Activated CD4-positive, alpha-beta memory T cell treated with anti-CD3 and anti-CD28 coated beads, Interleukin-2, amount 10 ng/mL, durations not matched to agents 7 days and 5 days (primary cell): ENCODE measurements at regions of chr1 and their contacts with region 1.

Region 1: DNA sequence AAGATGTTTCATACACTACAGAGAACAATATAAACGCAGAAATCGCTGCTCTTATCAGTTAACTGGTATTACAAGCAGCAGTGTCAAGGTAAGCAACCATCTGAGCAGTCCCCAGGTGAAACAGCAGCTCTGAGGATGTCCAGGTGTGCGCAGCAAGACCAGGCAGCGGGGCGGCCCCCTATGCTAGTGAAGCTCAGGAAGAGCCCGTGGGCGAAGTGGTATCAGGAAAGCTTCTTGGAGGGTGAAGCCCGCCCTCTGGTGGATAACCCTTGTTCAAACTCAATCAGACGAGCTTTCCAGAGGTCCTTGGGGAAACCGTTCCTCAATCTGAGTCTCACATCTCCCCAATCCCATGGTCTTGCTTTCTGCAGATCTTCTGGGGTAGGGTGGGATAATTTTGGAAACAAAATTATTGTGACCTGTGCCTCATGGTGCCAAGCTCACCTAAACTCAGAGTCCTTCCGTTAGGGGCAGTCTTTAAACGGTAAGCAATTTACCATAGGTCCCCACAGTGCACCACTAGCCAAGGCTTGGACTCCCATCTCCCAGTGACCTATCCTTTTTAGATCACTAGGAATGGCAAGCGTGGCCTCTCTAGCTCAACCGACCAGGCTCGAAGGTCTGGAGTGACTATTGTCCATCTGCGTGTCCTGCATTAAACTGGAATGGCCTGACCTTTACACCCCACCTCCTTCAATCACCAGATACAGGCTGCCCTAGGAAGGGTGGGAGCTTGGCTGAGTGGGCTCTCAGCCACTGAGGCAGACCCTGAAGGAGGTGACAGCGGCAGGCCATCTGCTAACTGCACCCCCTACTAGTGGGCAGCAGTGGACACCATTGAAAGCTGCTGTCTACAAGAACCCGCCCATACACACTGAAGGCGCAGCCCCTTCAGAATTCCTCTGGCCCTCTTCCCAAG is 13.6 kb upstream of the FAM110D start:
- DNase-seq: peak; percentile 76
- H3K4me3 Mint-ChIP-seq: no peak overlapping the region
- H3K27ac Mint-ChIP-seq: no peak overlapping the region
- H3K4me1 Mint-ChIP-seq: peaks cover 2% of the 10 kb centered on the region
- H3K27me3 Mint-ChIP-seq: peaks cover 30% of the 10 kb centered on the region

Region 2: DNA sequence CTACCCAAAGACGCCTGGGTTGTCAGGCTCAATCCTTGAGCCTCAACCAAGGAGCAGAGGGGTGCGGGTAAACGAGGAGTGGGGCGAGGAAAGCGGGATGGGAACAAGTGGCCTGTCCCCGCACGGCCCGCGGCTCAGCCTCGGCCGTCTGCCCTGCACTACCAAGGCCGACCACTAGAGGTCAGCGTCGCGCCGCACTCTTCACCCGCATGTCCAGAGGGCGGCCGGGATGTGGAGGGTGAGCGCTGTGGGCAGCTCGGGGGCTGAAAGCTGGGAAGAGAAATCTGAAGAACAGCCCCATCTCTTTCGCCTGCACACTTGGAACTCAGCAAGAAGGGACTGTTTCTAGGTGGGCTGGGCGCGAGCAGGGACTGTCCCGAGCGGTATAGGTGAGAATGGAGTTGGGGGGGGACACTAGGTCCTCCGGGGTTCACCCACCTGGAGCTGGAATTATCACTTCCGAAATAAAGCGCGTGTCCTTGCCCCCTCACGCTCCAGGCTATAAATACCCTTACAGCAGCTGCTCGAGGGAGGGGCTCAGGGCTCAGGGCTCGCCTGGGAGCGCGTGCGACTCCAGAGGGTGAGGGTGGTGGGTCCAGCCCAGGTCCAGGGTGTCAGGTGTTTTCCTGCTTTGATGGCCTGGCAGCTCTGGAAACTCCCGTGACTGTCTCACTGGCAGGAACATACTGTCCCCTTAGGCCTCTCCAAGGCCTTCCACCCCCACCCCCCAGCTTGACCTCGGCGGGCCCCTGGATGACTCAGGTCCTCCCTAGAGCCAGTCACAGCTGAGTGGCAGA is 109.1 kb before region 1 on chr1:
- CTCF ChIA-PET with region 1: interaction called, 33 read pairs
- POLR2A ChIA-PET with region 1: no interaction called
- DNase-seq: peak; percentile 77
- H3K4me3 Mint-ChIP-seq: peak overlapping the region; percentile 90
- H3K27ac Mint-ChIP-seq: no peak overlapping the region
- H3K4me1 Mint-ChIP-seq: peaks cover 11% of the 10 kb centered on the region
- H3K27me3 Mint-ChIP-seq: peaks cover 21% of the 10 kb centered on the region

Region 3: GRCh38 chr1:26102526-26102925 is 42.8 kb before region 1 on chr1:
- CTCF ChIA-PET with region 1: interaction called, 168 read pairs
- POLR2A ChIA-PET with region 1: interaction called, 18 read pairs
- DNase-seq: no peak
- H3K4me3 Mint-ChIP-seq: no peak overlapping the region
- H3K27ac Mint-ChIP-seq: no peak overlapping the region
- H3K4me1 Mint-ChIP-seq: peaks cover 20% of the 10 kb centered on the region
- H3K27me3 Mint-ChIP-seq: peaks cover 16% of the 10 kb centered on the region

Region 4: DNA sequence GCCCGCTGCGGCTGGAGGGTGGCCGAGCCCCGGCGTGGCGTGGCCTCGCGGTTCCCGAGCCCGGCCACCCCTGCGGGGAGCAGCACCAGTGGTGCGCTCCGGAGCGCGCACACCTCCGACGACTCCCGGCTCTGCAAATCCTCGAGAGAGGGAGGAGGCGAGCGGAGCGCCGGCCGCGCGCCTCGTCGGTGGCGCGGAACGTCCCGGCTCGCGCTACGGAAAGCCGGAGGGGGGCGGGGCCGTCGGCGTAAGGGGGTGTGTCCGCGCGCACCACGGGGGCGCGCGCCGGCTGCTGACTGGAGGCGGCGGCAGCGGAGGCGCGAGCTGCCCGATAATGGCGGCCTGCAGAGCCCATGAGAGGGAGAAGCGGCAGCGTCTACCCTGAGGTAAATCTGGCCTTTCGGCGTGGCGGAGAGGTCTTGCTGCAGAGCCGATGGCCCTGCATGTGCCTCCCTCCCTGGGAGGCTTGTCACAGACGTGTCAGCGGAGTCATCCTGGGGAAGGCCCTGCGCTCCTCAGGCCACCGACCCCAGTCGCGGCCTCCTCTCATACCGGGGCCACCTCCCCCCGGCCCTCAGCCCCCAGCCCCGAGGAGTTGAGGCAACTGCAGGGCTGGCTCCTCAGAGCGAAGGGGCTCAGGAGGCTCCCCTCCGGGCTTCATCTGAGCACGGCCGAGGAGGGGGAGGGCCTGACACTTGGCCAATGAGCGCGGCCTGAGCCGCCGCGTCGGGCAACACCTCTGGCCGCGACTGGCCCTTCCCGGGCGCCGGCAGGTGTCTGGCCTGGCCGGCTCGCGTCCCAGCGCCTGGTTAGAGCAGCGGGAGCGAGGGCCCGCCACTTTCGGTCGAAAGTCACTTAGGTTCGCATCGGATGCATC is 33.5 kb before region 1 on chr1 and contains the start of gene PDIK1L:
- CTCF ChIA-PET with region 1: interaction called, 168 read pairs
- POLR2A ChIA-PET with region 1: interaction called, 22 read pairs
- DNase-seq: peak; percentile 95
- H3K4me3 Mint-ChIP-seq: peak within 1 kb of the TSS; percentile 95
- H3K27ac Mint-ChIP-seq: peak within 1 kb of the TSS; percentile 86
- H3K4me1 Mint-ChIP-seq: peaks cover 35% of the 10 kb centered on the region
- H3K27me3 Mint-ChIP-seq: no peaks in the 10 kb centered on the region
- total RNA-seq, gene PDIK1L: 21.3 to 22.7 TPM

Region 5: GRCh38 chr1:26161415-26162219 is 16.3 kb after region 1 on chr1:
- CTCF ChIA-PET with region 1: interaction called, 16 read pairs
- POLR2A ChIA-PET with region 1: no interaction called
- DNase-seq: peak; percentile 35
- H3K4me3 Mint-ChIP-seq: no peak overlapping the region
- H3K27ac Mint-ChIP-seq: no peak overlapping the region
- H3K4me1 Mint-ChIP-seq: peaks cover 27% of the 10 kb centered on the region
- H3K27me3 Mint-ChIP-seq: peaks cover 50% of the 10 kb centered on the region

Region 6: GRCh38 chr1:26472901-26473845 is 327.9 kb after region 1 on chr1:
- CTCF ChIA-PET with region 1: no interaction called
- POLR2A ChIA-PET with region 1: no interaction called
- DNase-seq: peak; percentile 97
- H3K4me3 Mint-ChIP-seq: peak overlapping the region; percentile 90
- H3K27ac Mint-ChIP-seq: peak overlapping the region; percentile 66
- H3K4me1 Mint-ChIP-seq: peaks cover 52% of the 10 kb centered on the region
- H3K27me3 Mint-ChIP-seq: no peaks in the 10 kb centered on the region